ENCODE measurements at regions of chr20 and their contacts with region 1.

Region 1: GRCh38 chr20:5642155-5642981 is 107.8 kb upstream of the SHLD1 start:
- DNase-seq: no peak
- H3K4me3 ChIP-seq: no peak overlapping the region
- H3K27ac ChIP-seq: no peak overlapping the region
- H3K27me3 ChIP-seq: no peaks in the 10 kb centered on the region
- CTCF ChIP-seq: no peak

Region 2: GRCh38 chr20:5621305-5621704 is 21.1 kb before region 1 on chr20:
- CTCF ChIA-PET with region 1: no interaction called
- POLR2A ChIA-PET with region 1: interaction called, 10 read pairs
- DNase-seq: no peak
- H3K4me3 ChIP-seq: no peak overlapping the region
- H3K27ac ChIP-seq: no peak overlapping the region
- H3K27me3 ChIP-seq: no peaks in the 10 kb centered on the region
- CTCF ChIP-seq: no peak

Region 3: GRCh38 chr20:5680192-5680591 is 37.8 kb after region 1 on chr20:
- CTCF ChIA-PET with region 1: no interaction called
- POLR2A ChIA-PET with region 1: no interaction called
- DNase-seq: no peak
- H3K4me3 ChIP-seq: no peak overlapping the region
- H3K27ac ChIP-seq: no peak overlapping the region
- H3K27me3 ChIP-seq: no peaks in the 10 kb centered on the region
- CTCF ChIP-seq: no peak

Region 4: GRCh38 chr20:6094063-6094462 is 451.7 kb after region 1 on chr20:
- CTCF ChIA-PET with region 1: no interaction called
- POLR2A ChIA-PET with region 1: no interaction called
- DNase-seq: no peak
- H3K4me3 ChIP-seq: no peak overlapping the region
- H3K27ac ChIP-seq: no peak overlapping the region
- H3K27me3 ChIP-seq: no peaks in the 10 kb centered on the region
- CTCF ChIP-seq: no peak

Measured in AG04450 (cell line).